ENCODE measurements at regions of chr6 and their contacts with region 1.

Region 1: GRCh38 chr6:85678602-85679444 is 36.1 kb upstream of the SYNCRIP start:
- DNase-seq: peak; percentile 98
- H3K4me3 Mint-ChIP-seq: peak overlapping the region; percentile 97
- H3K27ac Mint-ChIP-seq: peak overlapping the region; percentile 98
- H3K4me1 Mint-ChIP-seq: peaks cover 25% of the 10 kb centered on the region
- H3K27me3 Mint-ChIP-seq: no peaks in the 10 kb centered on the region
- CTCF ChIP-seq: no peak

Region 2: GRCh38 chr6:85593438-85594196 is 85.2 kb before region 1 on chr6 and contains the start of gene SNX14:
- CTCF ChIA-PET with region 1: interaction called, 3 read pairs
- POLR2A ChIA-PET with region 1: interaction called, 111 read pairs
- intact Hi-C with region 1: loop called (anchors 5 kb)
- DNase-seq: peak; percentile 96
- H3K4me3 Mint-ChIP-seq: peak within 1 kb of the TSS; percentile 91
- H3K27ac Mint-ChIP-seq: peak within 1 kb of the TSS; percentile 98
- H3K4me1 Mint-ChIP-seq: peaks cover 19% of the 10 kb centered on the region
- H3K27me3 Mint-ChIP-seq: no peaks in the 10 kb centered on the region
- CTCF ChIP-seq: no peak
- total RNA-seq, gene SNX14: 71.3 and 71.6 TPM in 2 replicates

Region 3: GRCh38 chr6:85620308-85620707 is 58.5 kb before region 1 on chr6:
- CTCF ChIA-PET with region 1: no interaction called
- POLR2A ChIA-PET with region 1: interaction called, 9 read pairs
- intact Hi-C with region 1: loop called (anchors 10 kb)
- DNase-seq: no peak
- H3K4me3 Mint-ChIP-seq: no peak overlapping the region
- H3K27ac Mint-ChIP-seq: no peak overlapping the region
- H3K4me1 Mint-ChIP-seq: peaks cover 12% of the 10 kb centered on the region
- H3K27me3 Mint-ChIP-seq: no peaks in the 10 kb centered on the region
- CTCF ChIP-seq: no peak

Region 4: DNA sequence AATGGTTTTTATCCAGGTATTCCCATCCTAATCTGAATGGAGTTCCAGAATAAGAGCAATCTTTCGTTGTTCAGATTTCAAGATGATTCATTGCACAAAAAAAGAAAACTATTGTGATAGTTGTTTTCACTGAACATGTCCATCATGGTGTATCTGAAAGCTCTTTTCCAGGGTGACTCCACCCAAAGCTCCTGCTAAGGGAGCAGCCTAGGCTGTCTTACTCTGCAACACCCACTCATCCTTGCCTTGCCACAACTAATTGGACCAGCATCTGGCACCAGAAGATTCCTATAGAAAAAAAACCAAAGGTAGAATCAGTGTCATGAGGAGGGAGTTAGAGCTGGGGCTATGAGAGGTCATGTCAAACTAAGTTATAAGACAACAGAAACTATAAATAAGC is 28.2 kb before region 1 on chr6:
- CTCF ChIA-PET with region 1: interaction called, 69 read pairs
- POLR2A ChIA-PET with region 1: interaction called, 889 read pairs
- intact Hi-C with region 1: no loop called
- DNase-seq: no peak
- H3K4me3 Mint-ChIP-seq: no peak overlapping the region
- H3K27ac Mint-ChIP-seq: no peak overlapping the region
- H3K4me1 Mint-ChIP-seq: peaks cover 1% of the 10 kb centered on the region
- H3K27me3 Mint-ChIP-seq: no peaks in the 10 kb centered on the region
- CTCF ChIP-seq: no peak

Region 5: GRCh38 chr6:85747665-85748064 is 68.8 kb after region 1 on chr6:
- CTCF ChIA-PET with region 1: no interaction called
- POLR2A ChIA-PET with region 1: interaction called, 11 read pairs
- intact Hi-C with region 1: no loop called
- DNase-seq: peak; percentile 6
- H3K4me3 Mint-ChIP-seq: no peak overlapping the region
- H3K27ac Mint-ChIP-seq: no peak overlapping the region
- H3K4me1 Mint-ChIP-seq: no peaks in the 10 kb centered on the region
- H3K27me3 Mint-ChIP-seq: no peaks in the 10 kb centered on the region
- CTCF ChIP-seq: no peak

Measured in MCF 10A (cell line).